Psoas muscle (tissue), 8 donors: ENCODE measurements at regions of chr3 and their contacts with region 1.

Region 1: DNA sequence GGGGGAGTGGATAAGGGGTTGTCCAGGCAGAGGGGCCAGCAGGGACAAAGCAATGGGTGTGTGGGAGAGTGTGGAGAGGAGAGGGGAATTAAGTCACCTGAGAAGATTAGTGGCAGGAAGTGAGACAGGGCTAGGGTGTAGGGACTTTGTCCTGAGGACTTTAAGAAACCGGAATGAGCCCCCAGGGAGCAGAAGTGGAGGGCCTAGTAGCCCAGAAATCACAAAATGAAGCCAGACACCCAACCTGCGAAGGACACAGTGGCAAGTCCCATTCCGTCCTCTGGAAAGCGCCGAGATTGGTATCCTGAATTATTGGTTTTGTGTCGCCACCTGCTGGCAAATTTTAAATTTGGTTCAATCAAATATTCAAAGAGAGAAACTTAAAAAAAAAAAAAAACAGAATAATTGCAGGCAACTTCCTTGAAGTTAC is 78.0 kb upstream of the SLC25A36 start:
- DNase-seq: peak in 1 of 2 donors; percentile 13
- ATAC-seq: peak in 3 of 4 donors; percentile 43 to 69 (median 53)
- H3K4me3 ChIP-seq: no peak overlapping the region
- H3K27ac ChIP-seq: no peak overlapping the region
- H3K4me1 ChIP-seq: no peaks in the 10 kb centered on the region
- H3K27me3 ChIP-seq: no peaks in the 10 kb centered on the region
- CTCF ChIP-seq: peak; percentile 60

Region 2: GRCh38 chr3:139427283-139427993 is 1436.2 kb before region 1 on chr3:
- intact Hi-C with region 1: loop called in 1 of 2 experiments (anchors 10 kb)
- DNase-seq: no peak
- ATAC-seq: peak; percentile 75 to 96 (median 82)
- H3K4me3 ChIP-seq: no peak overlapping the region
- H3K27ac ChIP-seq: no peak overlapping the region
- H3K4me1 ChIP-seq: no peaks in the 10 kb centered on the region
- H3K27me3 ChIP-seq: no peaks in the 10 kb centered on the region
- CTCF ChIP-seq: peak; percentile 85

Region 3: GRCh38 chr3:139935016-139935865 is 928.4 kb before region 1 on chr3 and contains the start of gene CLSTN2:
- intact Hi-C with region 1: loop called in 1 of 2 experiments (anchors 2 kb)
- DNase-seq: peak; percentile 79 to 86
- ATAC-seq: peak; percentile 81 to 90 (median 86)
- H3K4me3 ChIP-seq: peak within 1 kb of the TSS; percentile 63
- H3K27ac ChIP-seq: no peak within 1 kb of the TSS
- H3K4me1 ChIP-seq: peaks cover 6% of the 10 kb centered on the region
- H3K27me3 ChIP-seq: peaks cover 0 to 33% (median 0%) of the 10 kb centered on the region in 3 donors
- CTCF ChIP-seq: peak; percentile 11
- total RNA-seq, gene CLSTN2: 1.5 to 5.0 (median 2.2) TPM

Region 4: DNA sequence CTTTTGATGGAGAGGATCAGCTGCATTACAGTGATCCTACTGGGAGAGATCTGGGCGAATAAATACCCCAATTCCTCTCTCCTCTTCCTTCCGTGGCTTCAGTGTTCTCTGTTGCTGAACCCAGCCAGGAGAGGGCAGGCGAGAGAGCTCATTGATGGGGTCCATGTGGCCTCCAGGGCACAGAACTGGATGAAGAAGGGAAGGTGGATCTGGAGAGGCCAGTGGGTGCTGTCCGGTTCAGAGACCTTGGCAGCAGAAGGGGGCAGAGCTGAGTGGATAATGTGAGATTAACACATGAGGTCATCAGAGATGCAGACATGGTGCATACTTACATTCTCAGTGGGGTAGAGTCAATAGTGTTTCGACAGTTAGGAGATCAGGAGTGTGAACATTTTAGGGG is 735.0 kb before region 1 on chr3:
- intact Hi-C with region 1: loop called in 1 of 2 experiments (anchors 10 kb)
- DNase-seq: peak; percentile 21 to 63
- ATAC-seq: peak; percentile 53 to 83 (median 64)
- H3K4me3 ChIP-seq: no peak overlapping the region
- H3K27ac ChIP-seq: no peak overlapping the region
- H3K4me1 ChIP-seq: no peaks in the 10 kb centered on the region
- H3K27me3 ChIP-seq: no peaks in the 10 kb centered on the region
- CTCF ChIP-seq: peak; percentile 57

Region 5: DNA sequence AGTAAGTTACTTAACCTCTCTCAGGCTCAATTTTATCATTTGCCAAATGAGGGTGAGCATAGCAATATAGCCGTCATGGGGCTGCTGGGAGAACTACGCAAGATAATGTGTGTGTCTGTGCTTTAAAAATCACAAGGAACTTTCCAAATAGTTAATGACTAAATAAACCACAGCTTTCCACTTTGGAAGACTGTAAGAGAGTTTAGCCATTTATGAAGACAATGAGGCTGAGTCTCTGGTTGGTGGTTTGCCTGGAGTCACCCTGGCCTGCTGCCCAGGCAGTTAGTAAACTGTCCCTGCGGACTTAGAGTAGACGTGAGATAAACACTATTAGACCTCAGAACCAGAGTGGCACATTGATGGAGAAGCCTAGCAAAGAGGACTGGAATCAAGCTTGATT is 570.9 kb before region 1 on chr3:
- intact Hi-C with region 1: loop called in 1 of 2 experiments (anchors 10 kb)
- DNase-seq: peak; percentile 78 to 79
- ATAC-seq: peak in 3 of 4 donors; percentile 21 to 66 (median 64)
- H3K4me3 ChIP-seq: no peak overlapping the region
- H3K27ac ChIP-seq: no peak overlapping the region
- H3K4me1 ChIP-seq: no peaks in the 10 kb centered on the region
- H3K27me3 ChIP-seq: no peaks in the 10 kb centered on the region
- CTCF ChIP-seq: no peak

Region 6: GRCh38 chr3:140499114-140499757 is 364.4 kb before region 1 on chr3:
- intact Hi-C with region 1: loop called in 1 of 2 experiments (anchors 10 kb)
- DNase-seq: no peak
- ATAC-seq: no peak
- H3K4me3 ChIP-seq: no peak overlapping the region
- H3K27ac ChIP-seq: no peak overlapping the region
- H3K4me1 ChIP-seq: no peaks in the 10 kb centered on the region
- H3K27me3 ChIP-seq: no peaks in the 10 kb centered on the region
- CTCF ChIP-seq: peak; percentile 47

Region 7: GRCh38 chr3:140910860-140911259 is 47.3 kb after region 1 on chr3:
- intact Hi-C with region 1: no loop called
- DNase-seq: no peak
- ATAC-seq: peak in 2 of 4 donors; percentile 46 to 47
- H3K4me3 ChIP-seq: no peak overlapping the region
- H3K27ac ChIP-seq: no peak overlapping the region
- H3K4me1 ChIP-seq: peaks cover 2% of the 10 kb centered on the region
- H3K27me3 ChIP-seq: no peaks in the 10 kb centered on the region
- CTCF ChIP-seq: no peak

Region 8: DNA sequence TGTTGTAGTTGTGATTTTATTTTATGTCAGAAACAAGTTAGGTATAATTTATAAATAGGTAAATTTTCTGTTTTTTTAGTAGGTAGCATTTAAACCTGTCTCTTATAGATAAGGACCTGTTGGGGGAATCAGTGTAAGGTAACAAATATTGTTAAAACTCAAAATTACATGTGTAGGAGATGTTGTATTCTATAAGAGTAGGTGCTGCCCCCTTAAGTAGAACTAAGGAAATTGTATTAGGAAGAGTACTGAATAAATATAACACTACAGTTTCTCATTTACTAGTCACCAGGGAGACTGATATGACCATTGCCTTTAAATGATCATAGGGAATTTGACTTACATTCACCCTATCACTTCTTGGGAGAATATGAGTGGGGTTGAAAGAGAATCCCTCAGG is 109.2 kb after region 1 on chr3:
- intact Hi-C with region 1: no loop called
- DNase-seq: no peak
- ATAC-seq: peak in 2 of 4 donors; percentile 47 to 72
- H3K4me3 ChIP-seq: no peak overlapping the region
- H3K27ac ChIP-seq: no peak overlapping the region
- H3K4me1 ChIP-seq: no peaks in the 10 kb centered on the region
- H3K27me3 ChIP-seq: no peaks in the 10 kb centered on the region
- CTCF ChIP-seq: peak; percentile 38